Activated CD8-positive, alpha-beta T cell treated with anti-CD3 and anti-CD28 coated beads, Interleukin-2, amount 10 ng/mL, durations not matched to agents 7 days and 5 days (primary cell): ENCODE measurements at regions of chr12 and their contacts with region 1.

Region 1: DNA sequence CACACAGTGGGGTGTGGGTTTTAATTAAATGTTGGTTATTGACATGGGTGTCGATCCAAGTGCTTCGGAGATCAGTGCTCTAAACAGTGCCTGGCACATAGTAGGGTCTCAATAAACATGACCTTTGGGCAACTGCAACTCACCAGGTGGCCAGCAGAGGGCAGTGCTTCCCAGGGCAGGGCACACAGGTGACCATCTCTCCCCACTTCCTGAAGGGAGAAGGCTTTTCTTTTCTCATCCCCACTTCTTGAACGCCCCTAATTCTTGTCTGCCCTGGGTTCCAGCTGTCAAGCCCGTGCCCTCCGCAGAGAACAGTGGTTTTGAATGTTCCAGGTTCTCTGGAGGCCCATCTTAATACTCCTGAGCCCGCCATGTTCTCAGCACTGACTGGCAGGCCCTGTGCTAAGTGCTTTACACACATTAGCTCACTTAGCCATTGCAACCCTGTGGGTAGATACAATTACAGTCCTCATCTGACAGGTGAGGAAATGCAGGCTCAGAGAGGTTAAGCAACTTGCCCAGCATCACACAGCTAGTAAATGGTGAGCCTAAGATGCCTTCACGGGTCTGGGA is 16.3 kb downstream of the RAPGEF3 start:
- DNase-seq: peak; percentile 82
- ATAC-seq: peak; percentile 55
- H3K4me3 Mint-ChIP-seq: no peak overlapping the region
- H3K27ac Mint-ChIP-seq: no peak overlapping the region
- H3K4me1 Mint-ChIP-seq: peaks cover 26% of the 10 kb centered on the region
- H3K27me3 Mint-ChIP-seq: peaks cover 19% of the 10 kb centered on the region

Region 2: DNA sequence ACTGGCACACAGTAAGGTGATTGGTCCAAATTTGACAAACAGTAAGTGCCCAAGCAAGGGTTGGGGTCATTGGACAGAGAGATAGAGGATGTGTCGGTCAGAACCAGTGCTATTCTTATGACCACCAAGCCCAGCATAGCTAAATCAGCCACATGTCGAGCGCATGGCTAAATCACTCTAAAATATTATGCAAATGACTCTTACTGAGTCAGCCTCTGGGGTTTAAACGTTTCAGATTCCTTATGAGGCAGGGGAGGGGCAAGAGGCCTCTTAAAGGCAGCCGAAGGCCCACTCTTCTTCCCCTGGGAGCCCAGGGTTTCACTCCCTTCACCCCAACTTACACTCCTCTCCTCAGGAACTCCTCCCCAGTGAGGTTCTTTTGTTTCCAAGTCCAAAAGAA is 16.4 kb before region 1 on chr12:
- CTCF ChIA-PET with region 1: interaction called, 102 read pairs
- POLR2A ChIA-PET with region 1: interaction called, 4 read pairs
- DNase-seq: no peak
- ATAC-seq: no peak
- H3K4me3 Mint-ChIP-seq: no peak overlapping the region
- H3K27ac Mint-ChIP-seq: no peak overlapping the region
- H3K4me1 Mint-ChIP-seq: peaks cover 39% of the 10 kb centered on the region
- H3K27me3 Mint-ChIP-seq: no peaks in the 10 kb centered on the region

Region 3: DNA sequence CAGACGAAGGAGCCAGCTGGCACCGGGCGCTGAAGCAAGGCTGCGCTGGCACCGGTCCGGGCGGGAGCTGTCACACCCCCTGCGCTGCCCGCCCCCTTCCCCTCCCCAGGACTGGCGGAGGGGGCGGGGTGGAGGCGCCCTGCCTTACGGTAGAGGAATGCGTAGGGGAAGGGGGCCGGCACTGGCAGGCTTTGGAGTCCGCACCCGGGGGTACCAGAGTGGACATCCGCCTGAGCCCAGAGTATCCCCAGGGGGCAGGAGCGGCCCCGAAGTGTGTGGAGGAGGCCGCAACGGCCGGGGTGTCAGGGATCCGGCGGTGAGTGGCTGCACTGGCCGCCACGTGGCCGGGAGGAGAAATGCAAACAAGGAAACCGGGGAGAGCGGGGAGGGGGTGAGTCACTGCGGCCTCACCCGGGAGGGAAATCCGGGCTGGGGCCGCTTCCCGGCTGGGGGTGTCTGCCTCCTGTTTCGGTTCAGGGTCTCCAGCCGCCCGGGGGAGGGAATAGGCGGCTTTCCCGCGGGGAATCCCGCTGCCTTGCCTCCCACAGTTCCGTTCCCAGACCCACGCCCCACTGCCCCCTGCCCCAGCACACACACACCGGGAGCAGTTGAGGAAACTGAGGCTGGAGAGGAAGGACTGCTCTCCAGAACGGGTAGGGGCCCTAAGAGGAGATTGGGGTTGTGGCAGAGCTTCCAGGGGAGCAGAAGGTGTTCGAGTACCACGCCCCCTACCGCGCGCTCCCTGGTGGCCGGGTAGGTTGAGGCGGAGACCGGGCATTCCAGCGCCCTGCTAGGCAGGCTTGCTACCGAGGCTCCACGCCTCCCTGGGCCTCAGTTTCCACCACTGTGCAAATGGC is 16.7 kb after region 1 on chr12 and contains the start of gene RAPGEF3:
- CTCF ChIA-PET with region 1: interaction called, 271 read pairs
- POLR2A ChIA-PET with region 1: interaction called, 9 read pairs
- DNase-seq: peak; percentile 64
- ATAC-seq: peak; percentile 86
- H3K4me3 Mint-ChIP-seq: peak within 1 kb of the TSS; percentile 67
- H3K27ac Mint-ChIP-seq: no peak within 1 kb of the TSS
- H3K4me1 Mint-ChIP-seq: peaks cover 38% of the 10 kb centered on the region
- H3K27me3 Mint-ChIP-seq: peaks cover 4% of the 10 kb centered on the region
- total RNA-seq, gene RAPGEF3: 0.24 TPM in 1 of 2 experiments, not detected in the other

Region 4: GRCh38 chr12:47779301-47779942 is 37.1 kb after region 1 on chr12:
- CTCF ChIA-PET with region 1: interaction called, 646 read pairs
- POLR2A ChIA-PET with region 1: interaction called, 3 read pairs
- DNase-seq: peak; percentile 94
- ATAC-seq: peak; percentile 91
- H3K4me3 Mint-ChIP-seq: no peak overlapping the region
- H3K27ac Mint-ChIP-seq: peak overlapping the region; percentile 47
- H3K4me1 Mint-ChIP-seq: peaks cover 44% of the 10 kb centered on the region
- H3K27me3 Mint-ChIP-seq: no peaks in the 10 kb centered on the region

Region 5: DNA sequence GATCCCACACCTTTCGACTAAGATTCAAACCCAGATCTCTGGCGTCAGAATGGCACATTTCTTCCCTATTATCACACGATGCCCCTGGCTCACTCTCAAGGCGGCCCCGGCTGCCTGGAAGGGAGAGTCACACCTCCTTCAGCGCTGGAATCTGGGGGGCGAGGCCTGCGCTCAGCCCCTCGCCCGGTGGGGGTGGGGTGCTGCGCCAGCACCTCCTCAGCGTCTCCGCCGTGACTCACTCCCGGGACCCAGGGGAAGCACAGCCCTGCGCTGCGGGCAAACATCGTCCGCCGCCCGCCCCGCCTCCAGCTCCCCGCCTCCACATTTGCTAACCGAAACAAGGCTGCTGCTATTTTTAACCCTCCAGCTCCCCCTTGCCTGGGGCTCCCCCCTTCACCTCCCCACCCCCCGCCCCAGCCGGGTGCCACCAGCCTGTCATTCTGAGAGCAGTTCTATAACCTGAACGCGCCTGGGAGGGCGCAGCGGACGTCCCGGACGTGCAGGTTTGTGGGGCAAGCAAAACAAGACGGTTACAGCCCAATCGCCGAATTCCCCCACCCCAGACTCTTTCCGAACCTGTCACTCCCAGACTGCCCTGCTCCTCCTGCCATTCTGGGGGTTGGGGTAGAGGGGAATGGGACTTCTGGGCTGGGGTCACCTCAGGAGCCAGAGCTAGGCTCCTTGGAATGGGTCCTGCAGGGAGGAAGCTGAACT is 70.6 kb after region 1 on chr12:
- CTCF ChIA-PET with region 1: interaction called, 56 read pairs
- POLR2A ChIA-PET with region 1: no interaction called
- DNase-seq: peak; percentile 96
- ATAC-seq: peak; percentile 61
- H3K4me3 Mint-ChIP-seq: peak overlapping the region; percentile 90
- H3K27ac Mint-ChIP-seq: peak overlapping the region; percentile 90
- H3K4me1 Mint-ChIP-seq: peaks cover 97% of the 10 kb centered on the region
- H3K27me3 Mint-ChIP-seq: no peaks in the 10 kb centered on the region

Region 6: DNA sequence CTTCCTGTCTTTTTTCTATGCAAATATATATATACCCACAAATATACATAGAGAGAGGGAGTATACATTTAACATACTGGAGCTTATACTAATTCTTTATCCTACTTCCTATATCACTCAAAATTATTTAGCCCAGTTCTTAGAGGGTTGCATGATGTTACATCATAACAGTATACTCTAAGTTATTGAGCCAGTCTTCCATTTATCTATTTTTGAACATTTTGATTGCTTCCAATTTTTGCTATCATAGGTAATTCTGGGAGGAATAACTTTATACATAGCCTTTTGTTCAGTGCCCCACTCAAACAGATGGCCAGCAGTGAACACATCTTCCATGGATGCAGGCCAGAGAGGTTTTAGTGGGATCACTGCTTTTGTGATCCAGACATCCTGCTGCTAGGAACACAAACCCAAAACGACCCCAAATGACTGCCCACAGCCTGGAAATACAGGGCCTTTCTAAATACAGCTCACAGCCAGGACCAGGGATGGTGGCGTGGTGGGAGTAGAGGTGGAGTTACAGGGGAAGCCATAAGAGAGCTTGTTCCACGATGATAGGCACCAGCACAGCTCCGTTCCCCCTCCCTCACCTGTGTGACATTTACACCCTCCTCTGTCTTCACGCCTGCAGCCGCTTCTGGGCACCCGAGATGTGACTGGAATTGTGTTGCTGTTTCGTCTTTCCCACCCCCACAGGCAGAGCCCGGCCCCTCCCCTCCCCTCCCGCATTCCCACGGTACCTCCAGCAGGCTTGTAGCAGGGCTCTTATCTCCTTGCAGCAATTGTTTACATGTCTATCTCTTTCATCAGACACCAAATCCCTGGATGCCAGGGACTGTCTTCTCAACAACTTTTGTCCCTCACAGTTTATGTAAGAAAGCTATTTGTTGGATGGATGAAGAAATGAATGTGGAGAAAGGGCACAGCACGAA is 108.1 kb after region 1 on chr12:
- CTCF ChIA-PET with region 1: interaction called, 12 read pairs
- POLR2A ChIA-PET with region 1: no interaction called
- DNase-seq: no peak
- ATAC-seq: no peak
- H3K4me3 Mint-ChIP-seq: no peak overlapping the region
- H3K27ac Mint-ChIP-seq: no peak overlapping the region
- H3K4me1 Mint-ChIP-seq: no peaks in the 10 kb centered on the region
- H3K27me3 Mint-ChIP-seq: no peaks in the 10 kb centered on the region

Region 7: GRCh38 chr12:47896633-47897032 is 154.3 kb after region 1 on chr12:
- CTCF ChIA-PET with region 1: no interaction called
- POLR2A ChIA-PET with region 1: no interaction called
- DNase-seq: no peak
- ATAC-seq: no peak
- H3K4me3 Mint-ChIP-seq: no peak overlapping the region
- H3K27ac Mint-ChIP-seq: peak overlapping the region; percentile 17
- H3K4me1 Mint-ChIP-seq: peaks cover 92% of the 10 kb centered on the region
- H3K27me3 Mint-ChIP-seq: no peaks in the 10 kb centered on the region

Region 8: GRCh38 chr12:47949441-47950308 is 207.3 kb after region 1 on chr12:
- CTCF ChIA-PET with region 1: interaction called, 12 read pairs
- POLR2A ChIA-PET with region 1: no interaction called
- DNase-seq: peak; percentile 50
- ATAC-seq: peak; percentile 75
- H3K4me3 Mint-ChIP-seq: no peak overlapping the region
- H3K27ac Mint-ChIP-seq: no peak overlapping the region
- H3K4me1 Mint-ChIP-seq: peaks cover 12% of the 10 kb centered on the region
- H3K27me3 Mint-ChIP-seq: peaks cover 18% of the 10 kb centered on the region